Mammary epithelial cell (primary cell): ENCODE measurements at regions of chr17 and their contacts with region 1.

Region 1: GRCh38 chr17:61574542-61575174 is 16.4 kb downstream of the NACA2 start:
- DNase-seq: peak; percentile 57
- H3K4me3 ChIP-seq: no peak overlapping the region
- H3K27ac ChIP-seq: no peak overlapping the region
- H3K4me1 ChIP-seq: no peaks in the 10 kb centered on the region
- H3K27me3 ChIP-seq: peaks cover 2% of the 10 kb centered on the region
- CTCF ChIP-seq: peak; percentile 29 to 45

Region 2: GRCh38 chr17:60720763-60721531 is 853.7 kb before region 1 on chr17:
- CTCF ChIA-PET with region 1: no interaction called
- dilution Hi-C with region 1: no loop called
- in situ Hi-C with region 1: no loop called
- intact Hi-C with region 1: loop called (anchors 10 kb)
- DNase-seq: peak; percentile 35
- H3K4me3 ChIP-seq: no peak overlapping the region
- H3K27ac ChIP-seq: no peak overlapping the region
- H3K4me1 ChIP-seq: no peaks in the 10 kb centered on the region
- H3K27me3 ChIP-seq: no peaks in the 10 kb centered on the region
- CTCF ChIP-seq: peak; percentile 81 to 87

Region 3: DNA sequence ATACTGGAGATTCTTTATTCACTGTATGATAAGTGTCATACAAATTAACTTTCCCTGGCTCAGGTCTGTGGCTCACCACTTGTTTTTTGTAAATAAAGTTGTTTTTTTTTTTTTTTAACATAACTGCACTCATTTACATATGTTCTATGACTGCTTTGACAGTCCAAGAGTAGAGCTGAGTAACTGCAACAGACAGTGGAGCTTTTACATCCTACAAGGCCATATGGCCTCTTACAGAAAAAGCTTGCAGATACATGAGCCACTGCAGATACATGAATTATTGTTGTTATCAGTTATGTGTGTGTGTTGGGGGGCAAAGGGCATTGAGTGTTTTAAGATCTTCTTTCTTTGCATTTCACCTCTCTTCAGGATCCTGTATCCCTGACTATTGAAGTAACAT is 585.3 kb before region 1 on chr17:
- CTCF ChIA-PET with region 1: no interaction called
- dilution Hi-C with region 1: no loop called
- in situ Hi-C with region 1: loop called in 1 of 2 experiments (anchors 25 kb)
- intact Hi-C with region 1: no loop called
- DNase-seq: no peak
- H3K4me3 ChIP-seq: no peak overlapping the region
- H3K27ac ChIP-seq: no peak overlapping the region
- H3K4me1 ChIP-seq: no peaks in the 10 kb centered on the region
- H3K27me3 ChIP-seq: no peaks in the 10 kb centered on the region
- CTCF ChIP-seq: no peak

Region 4: DNA sequence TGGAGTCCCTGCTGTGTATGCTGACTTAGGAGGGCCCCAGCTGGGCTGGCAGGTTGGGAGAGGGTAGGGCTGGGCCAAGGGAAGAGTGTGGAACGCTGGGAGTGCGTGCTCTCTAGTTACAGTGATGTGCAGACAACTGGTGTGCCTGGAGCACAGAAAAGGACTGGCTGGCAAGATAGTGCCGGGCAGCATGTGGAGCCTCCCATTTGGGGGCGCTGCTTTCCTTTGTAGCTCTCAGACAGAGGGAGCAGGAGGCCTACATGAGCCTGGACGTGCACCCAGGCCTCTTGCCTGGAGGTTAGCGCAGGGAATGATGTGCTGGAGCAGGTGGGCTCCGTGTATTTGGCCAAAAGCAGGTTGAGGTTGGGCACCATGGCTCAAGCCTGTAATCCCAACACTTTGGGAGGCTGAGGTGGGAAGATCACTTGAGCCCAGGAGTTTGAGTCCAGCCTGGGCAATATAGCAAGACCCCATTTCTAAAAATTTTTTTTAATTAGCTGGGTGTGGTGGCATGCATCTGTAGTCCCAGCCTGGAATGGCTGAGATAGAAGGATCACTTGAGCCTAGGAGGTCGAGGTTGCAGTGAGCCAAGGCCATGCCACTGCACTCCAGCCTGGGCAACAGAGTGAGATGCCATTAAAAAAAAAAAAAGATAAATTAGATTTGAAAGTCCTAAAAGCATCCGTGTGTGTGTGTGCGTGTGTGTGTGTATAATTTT is 148.5 kb before region 1 on chr17:
- CTCF ChIA-PET with region 1: no interaction called
- dilution Hi-C with region 1: no loop called
- in situ Hi-C with region 1: loop called in 1 of 2 experiments (anchors 10 kb)
- intact Hi-C with region 1: no loop called
- DNase-seq: no peak
- H3K4me3 ChIP-seq: no peak overlapping the region
- H3K27ac ChIP-seq: no peak overlapping the region
- H3K4me1 ChIP-seq: no peaks in the 10 kb centered on the region
- H3K27me3 ChIP-seq: no peaks in the 10 kb centered on the region
- CTCF ChIP-seq: peak in 1 of 2 donors; percentile 37

Region 5: GRCh38 chr17:61495145-61495857 is 79.4 kb before region 1 on chr17:
- CTCF ChIA-PET with region 1: no interaction called
- dilution Hi-C with region 1: no loop called
- in situ Hi-C with region 1: no loop called
- intact Hi-C with region 1: no loop called
- DNase-seq: peak; percentile 89
- H3K4me3 ChIP-seq: peak overlapping the region; percentile 32 to 46 (median 38)
- H3K27ac ChIP-seq: peak overlapping the region; percentile 70
- H3K4me1 ChIP-seq: peaks cover 19% of the 10 kb centered on the region
- H3K27me3 ChIP-seq: no peaks in the 10 kb centered on the region
- CTCF ChIP-seq: no peak

Region 6: DNA sequence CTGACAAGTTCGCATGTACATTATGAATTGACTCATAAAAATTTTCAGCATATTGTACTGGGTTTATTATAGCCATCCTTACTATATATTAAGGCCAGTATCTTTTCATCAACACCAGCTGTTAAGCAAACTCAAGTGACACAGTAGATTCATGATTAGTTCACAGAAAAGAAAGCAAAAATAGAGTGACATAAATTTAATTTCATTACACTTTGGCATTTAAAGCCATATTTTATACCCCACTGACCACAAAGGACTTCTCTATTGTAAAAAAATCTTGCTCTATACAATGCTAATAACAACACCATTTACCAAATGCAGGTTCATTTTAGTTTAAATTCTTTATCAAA is 37.0 kb after region 1 on chr17:
- CTCF ChIA-PET with region 1: no interaction called
- dilution Hi-C with region 1: no loop called
- in situ Hi-C with region 1: no loop called
- intact Hi-C with region 1: no loop called
- DNase-seq: no peak
- H3K4me3 ChIP-seq: no peak overlapping the region
- H3K27ac ChIP-seq: no peak overlapping the region
- H3K4me1 ChIP-seq: no peaks in the 10 kb centered on the region
- H3K27me3 ChIP-seq: no peaks in the 10 kb centered on the region
- CTCF ChIP-seq: no peak

Region 7: DNA sequence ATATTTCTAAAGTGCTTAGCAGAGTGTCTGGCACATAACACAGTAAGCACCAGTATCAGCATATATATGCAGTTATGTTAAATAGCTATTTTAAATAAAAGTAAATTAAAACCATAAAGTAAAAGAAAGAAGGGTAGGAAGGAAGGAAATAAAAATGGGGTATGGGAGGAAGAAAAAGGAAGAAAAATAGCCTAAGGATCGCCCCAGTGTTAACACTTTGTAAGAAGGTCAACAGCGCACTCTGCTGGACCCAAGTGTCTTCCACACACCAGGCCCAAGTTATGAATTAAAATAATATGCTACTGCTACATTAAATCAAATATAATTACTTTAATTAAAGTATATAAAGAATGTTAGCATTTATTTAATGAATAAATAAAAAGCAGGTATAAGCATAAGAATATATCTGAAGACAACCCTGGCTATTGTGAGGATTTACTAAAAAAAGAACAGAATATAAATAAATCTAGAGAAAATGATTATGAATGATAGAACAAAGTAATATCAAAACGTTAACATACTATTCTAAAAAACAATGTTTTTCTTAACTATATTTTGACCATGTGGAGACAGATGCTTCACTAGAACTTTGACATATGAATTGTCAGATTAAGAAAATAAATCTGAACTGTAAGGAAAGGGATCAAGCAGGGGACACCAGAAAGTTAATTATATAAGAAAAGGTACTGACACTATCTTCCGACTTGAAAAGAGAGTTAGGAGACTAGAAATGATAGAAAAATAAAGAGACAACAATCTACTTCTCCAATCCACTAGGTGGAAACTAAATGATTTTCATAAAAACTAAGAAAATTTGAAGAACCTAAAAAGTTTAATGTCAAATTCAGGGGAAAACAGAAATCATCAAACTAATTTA is 262.8 kb after region 1 on chr17:
- CTCF ChIA-PET with region 1: no interaction called
- dilution Hi-C with region 1: no loop called
- in situ Hi-C with region 1: no loop called
- intact Hi-C with region 1: loop called (anchors 5 kb)
- DNase-seq: peak; percentile 37
- H3K4me3 ChIP-seq: no peak overlapping the region
- H3K27ac ChIP-seq: no peak overlapping the region
- H3K4me1 ChIP-seq: peaks cover 17% of the 10 kb centered on the region
- H3K27me3 ChIP-seq: no peaks in the 10 kb centered on the region
- CTCF ChIP-seq: peak; percentile 70 to 83